ENCODE measurements at regions of chr1 and their contacts with region 1.

Region 1: DNA sequence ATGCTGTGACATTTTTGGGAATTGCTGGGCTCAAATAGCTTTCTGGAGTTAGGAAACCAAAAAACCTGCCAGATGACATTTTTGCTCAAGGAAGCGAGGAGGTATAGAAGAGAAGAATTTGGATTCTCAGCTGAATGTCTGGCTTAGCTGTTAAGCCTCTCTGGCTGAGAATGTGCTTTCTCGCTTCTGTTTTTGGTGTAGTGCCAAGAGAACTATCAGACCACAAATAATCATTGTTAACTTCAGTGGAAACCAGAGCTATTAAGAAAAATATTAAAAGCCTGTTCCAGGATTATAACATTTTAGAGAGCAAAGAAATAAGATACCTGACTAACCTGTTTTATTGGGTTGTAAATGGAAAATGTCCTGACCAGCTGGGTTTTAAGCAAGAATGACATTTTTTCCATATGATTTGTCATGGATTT is 39.5 kb upstream of the DIPK1A start:
- DNase-seq: no peak

Region 2: DNA sequence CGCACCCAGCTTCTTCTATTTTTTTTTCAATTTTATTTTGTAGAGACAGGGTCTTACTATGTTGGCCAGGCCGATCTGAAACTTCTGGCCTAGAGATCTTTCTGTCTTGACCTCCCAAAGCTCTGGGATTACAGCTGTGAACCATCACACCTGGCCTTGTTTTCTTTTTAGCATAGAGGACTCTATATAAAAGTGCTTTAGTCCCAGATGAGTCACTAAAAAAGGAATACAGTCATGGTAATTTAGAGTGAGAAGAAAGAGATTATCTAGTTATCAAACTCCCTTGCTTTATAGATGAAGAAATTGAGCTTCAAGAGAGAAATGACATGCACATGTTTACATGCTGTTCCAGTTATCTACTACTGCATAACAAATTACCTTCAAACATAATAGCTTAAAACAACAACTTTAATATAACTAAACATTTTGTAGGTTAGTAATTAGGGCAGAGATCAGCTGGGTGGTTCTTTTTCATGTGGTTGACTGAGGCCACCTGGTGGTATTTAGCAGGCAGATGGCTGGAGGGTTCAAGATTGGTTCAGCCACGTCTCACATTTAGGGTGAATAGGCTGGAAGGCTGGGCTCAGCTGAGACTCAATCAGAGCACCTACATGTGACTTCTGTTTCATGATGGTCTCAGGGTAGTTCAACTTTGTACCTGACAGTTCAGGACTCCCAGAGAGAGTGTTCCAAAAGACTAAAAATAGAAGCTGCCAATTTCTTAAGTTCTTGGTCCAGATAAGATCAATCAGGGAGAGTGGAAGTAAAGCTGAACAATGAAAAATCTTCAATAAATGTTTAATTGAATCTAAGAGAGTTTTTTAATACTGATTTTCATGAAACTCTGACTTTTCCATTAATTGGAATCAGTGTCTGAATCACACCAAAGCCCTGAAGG is 61.4 kb after region 1 on chr1:
- in situ Hi-C with region 1: loop called (anchors 10 kb)
- DNase-seq: peak; percentile 56

Measured in SK-MEL-5 (cell line).